Naive thymus-derived CD4-positive, alpha-beta T cell (primary cell): ENCODE measurements at regions of chr12 and their contacts with region 1.

Region 1: GRCh38 chr12:4269279-4269991 is 4.1 kb upstream of the CCND2 start:
- DNase-seq: peak; percentile 84 to 95 (median 94)
- ATAC-seq: peak; percentile 64
- H3K4me3 ChIP-seq: peak overlapping the region; percentile 85
- H3K4me3 Mint-ChIP-seq: peak overlapping the region; percentile 94 to 100 (median 97)
- H3K27ac ChIP-seq: peak overlapping the region; percentile 97
- H3K27ac Mint-ChIP-seq: peak overlapping the region; percentile 97 to 99 (median 98)
- H3K4me1 ChIP-seq: peaks cover 4 to 11% of the 10 kb centered on the region in 2 donors
- H3K4me1 Mint-ChIP-seq: peaks cover 4 to 29% (median 15%) of the 10 kb centered on the region in 7 donors
- H3K27me3 ChIP-seq: no peaks in the 10 kb centered on the region
- H3K27me3 Mint-ChIP-seq: peaks cover 0 to 35% (median 0%) of the 10 kb centered on the region in 5 donors

Region 2: DNA sequence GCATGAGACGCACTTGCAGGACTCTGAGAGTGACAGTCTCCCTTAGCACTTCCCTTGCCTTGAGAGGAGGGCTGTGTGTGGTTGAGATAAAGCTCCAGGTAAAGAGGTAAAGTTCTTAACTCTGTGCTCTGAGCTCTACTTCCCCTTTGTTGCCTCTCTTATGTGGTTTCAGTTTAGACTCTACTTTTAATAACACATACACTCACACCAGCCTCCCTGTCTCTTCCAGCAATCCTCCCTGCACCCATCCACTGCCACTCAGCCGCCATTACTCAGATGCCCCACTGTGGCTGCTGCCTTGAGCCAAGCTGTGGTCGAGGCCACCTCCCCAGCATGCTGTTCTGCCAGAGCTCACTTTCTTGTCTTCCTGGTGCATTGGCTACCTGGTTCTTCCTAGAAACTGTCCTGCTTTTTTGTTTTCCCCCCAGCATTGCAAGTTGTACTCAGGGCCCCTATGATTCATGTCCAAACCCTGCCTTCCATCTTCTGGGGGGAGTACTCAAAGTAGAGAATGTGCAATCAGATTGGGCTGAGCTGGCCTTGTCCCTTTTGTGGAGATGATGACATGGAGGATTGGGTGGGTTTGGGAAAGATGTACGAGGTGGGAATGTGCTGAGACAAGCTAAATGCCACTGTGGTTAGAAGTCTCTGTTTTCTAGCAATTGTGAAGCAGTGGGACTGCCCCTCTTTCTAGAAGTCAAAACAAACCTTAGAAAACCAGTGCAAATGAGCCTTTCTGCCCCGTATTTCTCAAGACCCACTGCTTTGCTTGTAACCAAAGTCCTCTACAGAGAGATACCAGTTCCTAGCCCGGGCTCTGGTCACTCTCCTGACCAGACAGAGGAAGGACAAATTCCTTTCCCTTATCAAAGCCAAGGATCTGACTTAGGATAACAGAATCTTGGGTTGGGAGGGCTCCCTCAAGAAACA is 280.7 kb before region 1 on chr12:
- CTCF ChIA-PET with region 1: interaction called, 3 read pairs
- POLR2A ChIA-PET with region 1: interaction called, 11 read pairs
- intact Hi-C with region 1: no loop called
- DNase-seq: peak in 7 of 9 donors; percentile 33 to 71 (median 62)
- ATAC-seq: peak; percentile 87
- H3K4me3 ChIP-seq: peak overlapping the region; percentile 20
- H3K4me3 Mint-ChIP-seq: peak overlapping the region; percentile 62 to 75 (median 70)
- H3K27ac ChIP-seq: peak overlapping the region; percentile 61
- H3K27ac Mint-ChIP-seq: peak overlapping the region; percentile 81 to 95 (median 91)
- H3K4me1 ChIP-seq: peaks cover 9 to 21% of the 10 kb centered on the region in 2 donors
- H3K4me1 Mint-ChIP-seq: peaks cover 12 to 52% (median 37%) of the 10 kb centered on the region in 7 donors
- H3K27me3 ChIP-seq: no peaks in the 10 kb centered on the region
- H3K27me3 Mint-ChIP-seq: peaks cover 0 to 15% (median 0%) of the 10 kb centered on the region in 5 donors

Region 3: GRCh38 chr12:4030929-4031702 is 238.3 kb before region 1 on chr12:
- CTCF ChIA-PET with region 1: interaction called, 5 read pairs
- POLR2A ChIA-PET with region 1: interaction called, 14 read pairs
- intact Hi-C with region 1: loop called in 1 of 2 experiments (anchors 1 kb)
- DNase-seq: peak; percentile 62 to 83 (median 74)
- ATAC-seq: peak; percentile 95
- H3K4me3 ChIP-seq: peak overlapping the region; percentile 50
- H3K4me3 Mint-ChIP-seq: peak overlapping the region; percentile 60 to 87 (median 84)
- H3K27ac ChIP-seq: peak overlapping the region; percentile 75
- H3K27ac Mint-ChIP-seq: peak overlapping the region in 8 of 9 donors; percentile 60 to 92 (median 86)
- H3K4me1 ChIP-seq: peaks cover 13 to 33% of the 10 kb centered on the region in 2 donors
- H3K4me1 Mint-ChIP-seq: peaks cover 22 to 54% (median 47%) of the 10 kb centered on the region in 7 donors
- H3K27me3 ChIP-seq: no peaks in the 10 kb centered on the region
- H3K27me3 Mint-ChIP-seq: peaks cover 0 to 33% (median 0%) of the 10 kb centered on the region in 5 donors

Region 4: DNA sequence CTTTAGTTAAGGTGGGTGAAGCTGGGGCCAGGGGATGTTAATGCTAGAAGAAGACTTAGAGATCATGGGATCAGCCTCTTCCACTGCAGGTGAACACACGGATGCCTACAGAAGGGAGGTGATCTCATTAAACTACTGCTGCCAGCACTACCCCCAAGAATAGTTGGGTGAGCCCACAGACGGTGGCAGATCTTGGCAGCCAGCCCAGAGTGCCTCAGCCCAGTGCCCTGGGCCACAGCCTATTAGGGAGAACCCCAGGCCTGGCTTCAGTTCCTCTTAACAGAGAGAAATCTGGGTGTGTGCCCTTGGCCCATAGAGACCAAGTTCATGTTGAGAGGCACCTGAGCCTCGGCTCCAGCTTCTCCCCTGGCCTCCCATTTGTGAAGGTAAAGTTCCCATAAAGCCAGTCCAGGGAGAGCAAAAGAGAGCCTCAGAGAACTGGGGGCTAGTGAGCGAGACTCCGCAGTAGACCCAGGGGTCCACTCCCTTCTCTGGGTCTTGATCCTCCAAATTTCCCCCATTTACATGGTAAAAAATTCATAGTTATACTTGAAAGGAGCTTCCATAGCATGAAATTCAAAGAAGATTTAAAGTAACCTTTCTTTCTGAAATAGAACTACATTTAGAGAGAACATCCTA is 120.9 kb before region 1 on chr12:
- CTCF ChIA-PET with region 1: interaction called, 5 read pairs
- POLR2A ChIA-PET with region 1: interaction called, 23 read pairs
- intact Hi-C with region 1: loop called (anchors 1 kb)
- DNase-seq: peak in 1 of 9 donors; percentile 37
- ATAC-seq: peak; percentile 80
- H3K4me3 ChIP-seq: no peak overlapping the region
- H3K4me3 Mint-ChIP-seq: no peak overlapping the region
- H3K27ac ChIP-seq: no peak overlapping the region
- H3K27ac Mint-ChIP-seq: peak overlapping the region in 5 of 9 donors; percentile 14 to 70 (median 61)
- H3K4me1 ChIP-seq: peaks cover 13 to 41% of the 10 kb centered on the region in 2 donors
- H3K4me1 Mint-ChIP-seq: peaks cover 20 to 93% (median 34%) of the 10 kb centered on the region in 7 donors
- H3K27me3 ChIP-seq: no peaks in the 10 kb centered on the region
- H3K27me3 Mint-ChIP-seq: no peaks in the 10 kb centered on the region

Region 5: DNA sequence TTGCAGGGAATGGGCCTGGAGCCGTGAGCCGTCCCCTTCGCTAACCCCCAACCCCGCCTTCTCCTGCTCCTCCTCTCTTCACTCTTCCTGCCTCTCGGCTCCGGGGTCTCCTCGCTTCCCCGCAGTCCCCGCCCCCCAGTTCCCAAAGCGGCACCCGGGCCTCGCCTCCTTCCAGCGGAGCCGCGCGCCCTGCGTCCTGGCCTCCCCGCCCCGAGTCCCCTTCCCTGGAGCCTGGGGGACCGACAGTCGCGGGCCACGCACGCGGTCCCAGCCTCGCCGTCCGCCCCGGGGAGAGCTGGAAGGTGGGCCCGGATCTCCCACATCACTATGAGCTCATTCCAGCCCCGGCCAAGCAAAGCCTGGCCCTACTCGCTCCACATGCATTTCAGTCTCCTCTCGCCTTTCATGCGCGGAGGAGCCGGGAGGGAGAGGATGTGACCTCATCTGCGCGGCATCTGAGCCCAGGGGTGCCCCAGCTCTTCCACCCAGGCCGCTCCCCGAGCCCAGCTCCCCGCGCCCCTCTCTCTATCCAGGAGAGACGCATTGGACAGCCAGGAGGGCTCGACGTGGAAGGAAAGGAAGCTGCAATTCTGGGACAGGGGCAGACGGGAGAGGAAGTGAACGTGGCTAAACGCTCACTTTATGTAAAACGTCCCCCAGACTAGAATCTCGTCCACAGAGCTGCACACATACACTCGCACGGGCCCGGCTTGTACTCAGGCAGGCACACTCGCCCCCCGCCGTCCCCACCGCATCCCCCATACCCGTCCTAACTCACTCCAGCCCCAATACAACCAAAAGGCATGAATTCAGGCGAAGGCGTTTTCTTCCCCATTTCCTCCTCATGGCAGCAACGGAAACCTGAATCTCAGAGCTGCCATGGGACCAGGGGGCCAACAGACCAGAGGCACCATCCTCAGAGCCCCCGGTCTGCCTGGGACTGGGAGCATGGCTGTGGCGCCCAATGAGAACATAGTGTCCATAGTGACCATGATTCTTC is 104.6 kb before region 1 on chr12:
- CTCF ChIA-PET with region 1: interaction called, 3 read pairs
- POLR2A ChIA-PET with region 1: interaction called, 10 read pairs
- intact Hi-C with region 1: loop called in 1 of 2 experiments (anchors 1 kb)
- DNase-seq: peak; percentile 43 to 65 (median 58)
- ATAC-seq: peak; percentile 93
- H3K4me3 ChIP-seq: peak overlapping the region; percentile 64
- H3K4me3 Mint-ChIP-seq: peak overlapping the region; percentile 82 to 94 (median 88)
- H3K27ac ChIP-seq: peak overlapping the region; percentile 71
- H3K27ac Mint-ChIP-seq: peak overlapping the region; percentile 82 to 98 (median 88)
- H3K4me1 ChIP-seq: peaks cover 4 to 6% of the 10 kb centered on the region in 2 donors
- H3K4me1 Mint-ChIP-seq: peaks cover 13 to 61% (median 20%) of the 10 kb centered on the region in 7 donors
- H3K27me3 ChIP-seq: no peaks in the 10 kb centered on the region
- H3K27me3 Mint-ChIP-seq: no peaks in the 10 kb centered on the region

Region 6: DNA sequence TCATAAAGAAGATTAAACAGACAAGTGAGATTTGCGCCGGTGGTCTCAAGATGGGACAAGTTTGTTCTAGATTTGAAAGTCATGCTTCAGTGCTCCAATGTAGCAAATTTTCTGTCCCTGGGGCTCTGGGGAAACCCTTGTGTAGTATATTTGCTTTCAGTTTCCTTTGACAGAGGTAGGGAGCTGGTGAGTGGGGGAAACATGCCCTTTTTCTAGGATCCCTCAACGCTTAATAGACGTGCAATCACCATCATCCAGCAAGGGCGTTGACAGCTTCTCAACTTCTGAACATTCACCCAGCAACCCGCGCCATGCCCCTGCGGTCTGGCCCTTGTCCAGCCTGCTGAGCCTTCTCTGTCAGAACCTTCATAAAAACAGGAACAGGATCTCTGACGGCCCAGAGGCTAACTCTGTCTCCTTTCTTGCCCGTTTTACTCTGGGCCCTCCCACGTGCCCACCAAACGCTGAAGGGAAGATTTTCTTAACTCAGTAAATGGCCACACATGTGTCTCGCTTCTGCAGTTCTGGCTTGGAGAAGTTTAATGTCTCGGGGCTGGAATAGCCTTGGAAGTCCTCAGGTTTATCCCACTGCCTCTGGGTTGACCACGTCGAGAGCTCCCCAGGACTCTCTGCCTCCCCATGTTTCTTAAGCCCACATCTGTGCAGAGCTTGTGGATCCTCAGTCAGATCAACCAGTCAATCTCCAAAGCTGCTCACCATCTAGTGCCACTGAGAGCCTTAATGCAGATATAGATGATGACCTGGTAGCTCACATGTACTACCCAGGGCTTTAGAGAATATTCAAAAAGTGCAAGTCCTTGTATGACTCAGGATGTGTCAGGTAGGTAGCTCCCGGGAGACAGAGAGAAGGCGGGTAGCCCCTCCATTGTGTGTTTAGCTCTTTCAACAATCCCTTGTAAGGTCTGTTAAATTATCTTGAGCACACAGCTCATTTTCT is 53.9 kb before region 1 on chr12:
- CTCF ChIA-PET with region 1: no interaction called
- POLR2A ChIA-PET with region 1: interaction called, 4 read pairs
- intact Hi-C with region 1: loop called in 1 of 2 experiments (anchors 5 kb)
- DNase-seq: peak; percentile 7 to 35 (median 19)
- ATAC-seq: peak; percentile 89
- H3K4me3 ChIP-seq: peak overlapping the region; percentile 36
- H3K4me3 Mint-ChIP-seq: peak overlapping the region; percentile 36 to 78 (median 68)
- H3K27ac ChIP-seq: peak overlapping the region; percentile 14
- H3K27ac Mint-ChIP-seq: peak overlapping the region; percentile 41 to 86 (median 78)
- H3K4me1 ChIP-seq: peaks cover 9 to 10% of the 10 kb centered on the region in 2 donors
- H3K4me1 Mint-ChIP-seq: peaks cover 11 to 48% (median 23%) of the 10 kb centered on the region in 7 donors
- H3K27me3 ChIP-seq: no peaks in the 10 kb centered on the region
- H3K27me3 Mint-ChIP-seq: peaks cover 0 to 2% (median 0%) of the 10 kb centered on the region in 5 donors

Region 7: GRCh38 chr12:4251216-4251891 is 18.1 kb before region 1 on chr12:
- CTCF ChIA-PET with region 1: interaction called, 20 read pairs
- POLR2A ChIA-PET with region 1: interaction called, 9 read pairs
- intact Hi-C with region 1: loop called in 1 of 2 experiments (anchors 1 kb)
- DNase-seq: peak in 7 of 9 donors; percentile 23 to 62 (median 52)
- ATAC-seq: peak; percentile 85
- H3K4me3 ChIP-seq: no peak overlapping the region
- H3K4me3 Mint-ChIP-seq: peak overlapping the region in 5 of 10 donors; percentile 7 to 61 (median 23)
- H3K27ac ChIP-seq: no peak overlapping the region
- H3K27ac Mint-ChIP-seq: peak overlapping the region in 6 of 9 donors; percentile 1 to 43 (median 10)
- H3K4me1 ChIP-seq: peaks cover 0 to 6% of the 10 kb centered on the region in 2 donors
- H3K4me1 Mint-ChIP-seq: peaks cover 8 to 11% (median 9%) of the 10 kb centered on the region in 7 donors
- H3K27me3 ChIP-seq: no peaks in the 10 kb centered on the region
- H3K27me3 Mint-ChIP-seq: peaks cover 0 to 10% (median 7%) of the 10 kb centered on the region in 5 donors